ENCODE measurements at regions of chr2 and their contacts with region 1.

Region 1: DNA sequence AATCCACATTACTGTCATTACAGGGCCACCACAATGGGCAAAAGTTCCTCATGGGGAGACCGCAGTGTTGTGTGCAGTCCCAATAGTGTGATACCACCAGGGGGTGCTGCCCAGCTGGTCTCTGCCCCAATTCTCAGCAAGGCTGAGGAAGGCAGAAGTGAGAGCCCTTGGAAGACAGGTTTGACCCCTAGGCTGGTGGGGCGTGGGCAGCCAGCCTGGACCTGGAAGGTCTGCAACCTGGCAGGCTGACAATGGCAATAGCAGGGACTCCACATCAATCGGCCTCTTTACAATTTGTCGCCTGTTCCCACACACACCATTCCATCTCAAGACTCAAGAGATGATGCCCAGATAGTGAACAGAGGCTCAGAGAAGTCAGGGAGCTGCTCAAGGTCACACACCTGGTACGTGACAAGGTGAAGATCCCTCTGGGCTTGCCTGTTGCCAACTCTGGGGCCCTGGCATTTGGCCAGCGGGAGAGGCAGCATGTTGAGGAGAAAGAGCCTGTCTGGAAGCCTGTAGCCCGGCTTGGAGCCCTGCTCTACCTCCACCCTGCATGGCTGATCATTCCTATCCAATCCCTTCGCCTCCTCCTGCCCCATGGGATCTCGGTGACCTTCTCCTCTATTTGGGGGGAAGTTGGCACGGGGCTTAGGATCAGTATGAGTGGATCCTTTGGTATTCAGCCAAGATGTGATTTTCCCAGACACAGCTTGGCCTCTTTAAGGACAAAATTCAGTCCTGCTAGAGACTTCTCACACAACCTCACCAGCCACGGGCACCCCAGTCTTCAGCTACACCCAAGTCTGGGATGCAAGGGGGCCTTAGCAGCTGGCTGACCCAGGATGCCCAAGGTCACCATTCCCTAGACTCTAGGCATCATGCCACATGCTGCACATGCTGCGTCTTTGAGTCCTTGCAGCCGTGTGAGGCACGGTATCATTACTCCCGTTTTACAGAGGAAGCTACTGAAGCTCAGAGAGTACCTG is 2.9 kb upstream of the ATOH8 start:
- DNase-seq: peak; percentile 16 to 69 (median 57)
- ATAC-seq: peak; percentile 58
- H3K4me3 ChIP-seq: no peak overlapping the region
- H3K4me3 Mint-ChIP-seq: no peak overlapping the region
- H3K27ac ChIP-seq: no peak overlapping the region
- H3K27ac Mint-ChIP-seq: no peak overlapping the region
- H3K4me1 ChIP-seq: peaks cover 18% of the 10 kb centered on the region
- H3K4me1 Mint-ChIP-seq: peaks cover 25% of the 10 kb centered on the region
- H3K27me3 ChIP-seq: peaks cover 17 to 18% of the 10 kb centered on the region in 2 experiments
- H3K27me3 Mint-ChIP-seq: peaks cover 50% of the 10 kb centered on the region
- CTCF ChIP-seq: peak; percentile 66

Region 2: DNA sequence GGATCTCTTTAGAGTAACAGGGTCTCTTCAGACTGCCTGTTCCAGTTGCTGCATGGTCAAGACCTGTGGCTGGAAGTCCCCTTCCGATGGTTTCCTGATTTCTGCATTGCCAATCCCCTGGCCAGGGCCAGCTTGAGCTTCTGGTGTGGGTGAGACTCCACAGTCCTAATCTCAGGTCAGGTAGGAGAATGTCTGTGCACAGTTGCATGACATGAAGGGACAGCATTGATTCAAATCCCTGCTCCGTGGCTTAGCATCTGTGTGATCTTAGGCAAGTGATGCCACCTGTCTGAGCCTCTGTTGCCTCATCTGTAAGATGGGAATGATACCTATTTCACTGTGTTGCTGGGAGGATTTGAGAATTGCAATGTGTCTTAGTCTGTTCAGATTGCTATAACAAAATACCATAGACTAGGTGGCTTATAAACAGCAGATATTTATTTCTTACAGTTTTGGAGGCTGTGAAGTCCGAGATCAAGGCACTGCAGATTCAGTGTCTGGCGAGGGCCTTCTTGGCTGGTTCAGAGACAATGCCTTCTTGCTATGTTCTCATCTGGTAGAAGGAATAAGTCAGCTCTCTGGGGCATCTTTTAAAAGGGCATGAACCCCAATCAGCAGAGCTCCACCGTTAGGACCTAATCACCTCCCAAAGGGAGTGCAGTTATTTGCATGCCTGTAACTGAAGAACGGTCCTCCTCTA is 69.1 kb after region 1 on chr2:
- CTCF ChIA-PET with region 1: interaction called, 63 read pairs
- POLR2A ChIA-PET with region 1: no interaction called
- intact Hi-C with region 1: no loop called
- DNase-seq: no peak
- ATAC-seq: no peak
- H3K4me3 ChIP-seq: no peak overlapping the region
- H3K4me3 Mint-ChIP-seq: no peak overlapping the region
- H3K27ac ChIP-seq: no peak overlapping the region
- H3K27ac Mint-ChIP-seq: no peak overlapping the region
- H3K4me1 ChIP-seq: no peaks in the 10 kb centered on the region
- H3K4me1 Mint-ChIP-seq: no peaks in the 10 kb centered on the region
- H3K27me3 ChIP-seq: no peaks in the 10 kb centered on the region
- H3K27me3 Mint-ChIP-seq: peaks cover 7% of the 10 kb centered on the region
- CTCF ChIP-seq: no peak

Measured in CD8-positive, alpha-beta T cell (primary cell).